Endothelial cell of umbilical vein (primary cell): ENCODE measurements at regions of chrX and their contacts with region 1.

Region 1: GRCh38 chrX:132092439-132093065 is 35.3 kb downstream of the FRMD7 start:
- DNase-seq: peak; percentile 68
- H3K4me3 ChIP-seq: no peak overlapping the region
- H3K27ac ChIP-seq: no peak overlapping the region
- H3K4me1 ChIP-seq: no peaks in the 10 kb centered on the region
- H3K27me3 ChIP-seq: no peaks in the 10 kb centered on the region
- CTCF ChIP-seq: peak; percentile 38 to 60
- POLR2A ChIP-seq: no peak

Region 2: DNA sequence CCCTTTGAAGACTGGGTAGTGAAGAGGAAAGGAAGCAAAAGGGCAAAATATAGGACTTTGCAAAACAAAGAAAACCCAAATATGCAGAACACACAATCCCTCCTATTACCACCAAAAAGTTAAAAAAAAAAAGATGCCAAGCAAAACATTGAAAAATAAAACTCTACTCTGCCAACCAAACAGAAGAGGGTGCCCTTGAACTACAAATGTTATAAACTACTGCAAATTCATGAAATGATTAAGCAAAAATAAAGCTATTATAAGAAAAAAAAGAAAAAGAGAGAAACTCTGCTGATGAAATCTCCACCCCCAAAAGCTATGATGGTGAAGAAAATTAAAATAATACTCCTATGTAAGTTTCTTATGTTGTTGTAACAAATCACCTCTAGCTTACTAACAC is 238.0 kb before region 1 on chrX:
- CTCF ChIA-PET with region 1: interaction called, 10 read pairs
- POLR2A ChIA-PET with region 1: no interaction called
- dilution Hi-C with region 1: no loop called
- intact Hi-C with region 1: no loop called
- DNase-seq: peak; percentile 20
- H3K4me3 ChIP-seq: no peak overlapping the region
- H3K27ac ChIP-seq: no peak overlapping the region
- H3K4me1 ChIP-seq: no peaks in the 10 kb centered on the region
- H3K27me3 ChIP-seq: no peaks in the 10 kb centered on the region
- CTCF ChIP-seq: no peak
- POLR2A ChIP-seq: no peak

Region 3: DNA sequence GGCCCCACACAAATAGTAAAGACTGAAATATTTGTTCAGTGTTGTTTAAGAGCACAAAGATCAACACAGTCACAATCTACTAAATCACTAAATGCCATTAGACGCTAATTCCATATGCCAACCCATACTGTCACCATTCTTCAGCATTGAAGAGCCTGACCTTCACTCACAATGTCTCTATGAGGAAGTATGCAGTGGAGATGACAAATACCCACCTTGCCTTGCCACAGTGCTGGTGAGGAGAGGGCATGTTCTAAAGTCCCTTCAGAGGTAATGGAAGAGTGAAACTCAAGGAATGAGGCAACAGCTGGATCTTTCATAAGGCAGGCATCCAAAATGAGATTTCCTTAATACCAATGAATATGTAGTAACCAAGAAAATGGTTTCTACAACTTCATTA is 15.1 kb before region 1 on chrX:
- CTCF ChIA-PET with region 1: interaction called, 19 read pairs
- POLR2A ChIA-PET with region 1: no interaction called
- dilution Hi-C with region 1: no loop called
- intact Hi-C with region 1: no loop called
- DNase-seq: no peak
- H3K4me3 ChIP-seq: no peak overlapping the region
- H3K27ac ChIP-seq: no peak overlapping the region
- H3K4me1 ChIP-seq: peaks cover 3% of the 10 kb centered on the region
- H3K27me3 ChIP-seq: no peaks in the 10 kb centered on the region
- CTCF ChIP-seq: no peak
- POLR2A ChIP-seq: no peak

Region 4: DNA sequence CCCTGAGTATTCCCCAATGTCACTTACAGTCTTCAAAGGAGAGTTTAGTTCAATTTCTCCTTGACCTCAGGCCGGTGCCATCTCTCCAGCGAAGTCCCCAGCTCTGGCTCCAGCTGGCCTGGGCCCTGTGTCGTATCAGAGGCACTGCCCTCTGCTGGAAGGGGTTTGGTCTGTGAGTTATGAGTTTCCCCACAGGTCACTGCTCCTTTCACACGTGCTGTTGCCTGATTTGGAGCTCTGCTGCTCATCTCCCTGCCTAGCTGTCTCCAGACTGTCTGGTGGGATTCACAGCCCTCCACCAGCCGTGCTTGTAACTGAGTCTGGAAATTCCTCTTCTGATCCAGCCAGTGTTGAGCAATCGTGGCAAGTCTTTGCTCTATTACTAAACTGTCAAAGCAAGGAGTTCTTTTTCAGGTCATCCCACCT is 126.8 kb after region 1 on chrX and contains the start of gene RAP2C:
- CTCF ChIA-PET with region 1: interaction called, 113 read pairs
- POLR2A ChIA-PET with region 1: no interaction called
- dilution Hi-C with region 1: no loop called
- intact Hi-C with region 1: loop called (anchors 1 kb)
- DNase-seq: peak; percentile 67
- H3K4me3 ChIP-seq: peak within 1 kb of the TSS; percentile 82 to 91 (median 83)
- H3K27ac ChIP-seq: peak within 1 kb of the TSS; percentile 78
- H3K4me1 ChIP-seq: peaks cover 11% of the 10 kb centered on the region
- H3K27me3 ChIP-seq: no peaks in the 10 kb centered on the region
- CTCF ChIP-seq: peak; percentile 48 to 64
- POLR2A ChIP-seq: no peak
- total RNA-seq, gene RAP2C: 22.2 and 23.4 TPM in 2 replicates

Region 5: DNA sequence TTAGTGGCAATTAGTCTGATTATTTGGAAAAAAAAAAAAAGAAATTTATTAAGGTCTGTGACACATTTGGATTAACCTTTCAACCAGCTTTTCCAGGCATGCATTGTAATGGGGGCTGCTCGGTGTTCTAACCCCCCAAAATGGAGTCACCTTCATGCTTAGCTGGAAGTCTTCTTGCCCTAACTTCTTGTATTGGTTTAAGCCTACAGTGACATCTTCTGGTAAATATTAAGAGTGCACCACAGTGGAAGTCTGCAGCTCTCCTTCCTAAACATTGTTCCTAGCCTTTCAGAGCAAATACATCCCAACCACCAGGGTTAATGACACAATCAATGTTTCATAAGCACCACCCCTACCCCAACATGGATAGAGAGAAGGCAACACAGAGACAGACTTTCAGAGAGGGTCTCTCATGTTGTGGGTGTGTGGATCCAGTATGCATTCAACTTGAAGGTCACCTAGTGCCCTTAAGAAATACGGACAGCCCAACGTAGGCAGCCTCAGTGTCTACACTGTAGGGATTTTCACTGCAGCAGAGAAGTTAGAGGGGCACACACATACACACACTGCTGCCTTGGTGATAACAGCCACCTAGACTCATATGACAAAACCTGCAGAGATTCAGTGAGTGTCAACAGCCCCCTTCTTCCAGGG is 539.2 kb after region 1 on chrX:
- CTCF ChIA-PET with region 1: interaction called, 11 read pairs
- POLR2A ChIA-PET with region 1: no interaction called
- dilution Hi-C with region 1: no loop called
- intact Hi-C with region 1: no loop called
- DNase-seq: peak; percentile 33
- H3K4me3 ChIP-seq: no peak overlapping the region
- H3K27ac ChIP-seq: no peak overlapping the region
- H3K4me1 ChIP-seq: no peaks in the 10 kb centered on the region
- H3K27me3 ChIP-seq: no peaks in the 10 kb centered on the region
- CTCF ChIP-seq: peak; percentile 27 to 30
- POLR2A ChIP-seq: no peak